ENCODE measurements at regions of chr19 and their contacts with region 1.

Region 1: DNA sequence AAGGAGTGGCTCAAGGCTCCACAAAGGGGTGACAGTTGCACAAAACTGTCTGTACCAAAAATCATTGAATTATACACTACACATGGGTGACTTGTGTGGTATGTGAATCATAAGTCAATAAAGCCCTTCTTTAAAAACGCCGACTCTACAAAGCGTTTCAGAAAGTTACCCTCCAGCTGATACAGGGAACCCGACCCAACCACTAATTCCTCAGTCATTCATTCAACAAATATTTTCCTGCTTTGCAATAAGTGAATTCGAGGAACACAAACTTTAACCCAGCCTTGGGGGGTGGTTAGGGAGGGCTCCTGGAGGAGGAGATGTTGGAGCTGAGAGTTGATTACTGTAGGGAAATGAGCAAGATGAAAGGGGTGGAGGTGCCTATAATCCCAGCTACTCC is 32.0 kb downstream of the LTBP4 start:
- DNase-seq: no peak
- H3K4me3 ChIP-seq: no peak overlapping the region
- H3K4me3 Mint-ChIP-seq: no peak overlapping the region
- H3K27ac ChIP-seq: no peak overlapping the region
- H3K27ac Mint-ChIP-seq: no peak overlapping the region
- H3K4me1 ChIP-seq: peaks cover 6% of the 10 kb centered on the region
- H3K4me1 Mint-ChIP-seq: peaks cover 4 to 14% (median 7%) of the 10 kb centered on the region in 4 donors
- H3K27me3 ChIP-seq: no peaks in the 10 kb centered on the region
- H3K27me3 Mint-ChIP-seq: peaks cover 0 to 2% of the 10 kb centered on the region in 2 donors

Region 2: GRCh38 chr19:40305403-40305802 is 327.8 kb before region 1 on chr19:
- CTCF ChIA-PET with region 1: interaction called, 15 read pairs
- POLR2A ChIA-PET with region 1: no interaction called
- intact Hi-C with region 1: loop called (anchors 1 kb)
- DNase-seq: peak; percentile 66 to 73 (median 71)
- H3K4me3 ChIP-seq: no peak overlapping the region
- H3K4me3 Mint-ChIP-seq: no peak overlapping the region
- H3K27ac ChIP-seq: no peak overlapping the region
- H3K27ac Mint-ChIP-seq: no peak overlapping the region
- H3K4me1 ChIP-seq: no peaks in the 10 kb centered on the region
- H3K4me1 Mint-ChIP-seq: peaks cover 0 to 5% (median 2%) of the 10 kb centered on the region in 4 donors
- H3K27me3 ChIP-seq: no peaks in the 10 kb centered on the region
- H3K27me3 Mint-ChIP-seq: no peaks in the 10 kb centered on the region

Region 3: DNA sequence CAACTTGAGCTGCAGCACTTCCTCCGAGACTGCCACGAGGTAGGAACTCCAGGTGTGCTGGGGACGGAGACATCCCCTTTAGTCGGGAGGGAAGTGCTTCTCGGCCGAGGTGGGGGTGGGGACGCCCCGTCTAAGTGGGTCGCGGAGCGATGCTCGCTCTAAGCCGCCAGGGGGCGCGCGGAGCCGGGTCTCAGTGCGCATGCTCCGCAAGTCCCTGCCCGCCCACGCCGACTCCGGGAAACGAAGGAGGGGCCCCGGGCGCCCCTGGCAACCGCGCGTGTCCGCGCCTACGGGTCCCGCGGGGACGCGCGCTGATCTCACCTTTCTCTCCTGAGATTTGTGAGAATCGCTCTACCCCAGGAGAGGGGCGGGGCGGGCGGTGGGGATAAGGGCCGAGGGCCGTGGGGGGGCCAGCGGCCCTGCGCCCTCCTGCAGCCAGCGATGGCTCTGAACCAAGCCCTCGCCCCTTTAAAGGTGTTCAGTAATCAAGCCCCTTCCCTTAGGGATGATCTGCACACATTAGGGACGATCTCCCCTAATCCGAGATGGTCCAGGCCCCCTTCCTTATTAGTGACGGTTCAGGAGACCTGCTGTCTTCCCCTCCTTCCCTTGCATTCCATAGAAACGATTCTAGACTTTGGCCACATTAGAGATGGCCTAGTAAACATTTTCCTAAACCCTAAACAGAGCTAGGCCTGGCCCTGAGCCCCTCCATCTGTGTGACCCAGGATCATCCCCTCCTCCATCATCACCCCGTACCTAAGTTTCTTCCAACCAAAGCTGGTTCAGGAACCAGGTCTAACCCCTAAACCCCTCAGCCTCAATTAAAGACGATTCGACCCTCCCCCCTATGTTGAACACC is 103.9 kb before region 1 on chr19:
- CTCF ChIA-PET with region 1: interaction called, 9 read pairs
- POLR2A ChIA-PET with region 1: no interaction called
- intact Hi-C with region 1: loop called (anchors 1 kb)
- DNase-seq: peak; percentile 88 to 90 (median 89)
- H3K4me3 ChIP-seq: peak overlapping the region in 1 of 2 donors; percentile 54
- H3K4me3 Mint-ChIP-seq: peak overlapping the region; percentile 65 to 87 (median 78)
- H3K27ac ChIP-seq: no peak overlapping the region
- H3K27ac Mint-ChIP-seq: peak overlapping the region; percentile 53 to 93 (median 77)
- H3K4me1 ChIP-seq: peaks cover 14% of the 10 kb centered on the region
- H3K4me1 Mint-ChIP-seq: peaks cover 9 to 26% (median 15%) of the 10 kb centered on the region in 4 donors
- H3K27me3 ChIP-seq: peaks cover 9% of the 10 kb centered on the region
- H3K27me3 Mint-ChIP-seq: peaks cover 18 to 30% of the 10 kb centered on the region in 2 donors

Region 4: GRCh38 chr19:40542202-40542859 is 90.9 kb before region 1 on chr19:
- CTCF ChIA-PET with region 1: interaction called, 40 read pairs
- POLR2A ChIA-PET with region 1: no interaction called
- intact Hi-C with region 1: no loop called
- DNase-seq: no peak
- H3K4me3 ChIP-seq: no peak overlapping the region
- H3K4me3 Mint-ChIP-seq: no peak overlapping the region
- H3K27ac ChIP-seq: no peak overlapping the region
- H3K27ac Mint-ChIP-seq: peak overlapping the region in 1 of 7 donors; percentile 18
- H3K4me1 ChIP-seq: no peaks in the 10 kb centered on the region
- H3K4me1 Mint-ChIP-seq: peaks cover 0 to 1% (median under 1%) of the 10 kb centered on the region in 4 donors
- H3K27me3 ChIP-seq: no peaks in the 10 kb centered on the region
- H3K27me3 Mint-ChIP-seq: peaks cover 7 to 9% of the 10 kb centered on the region in 2 donors

Region 5: DNA sequence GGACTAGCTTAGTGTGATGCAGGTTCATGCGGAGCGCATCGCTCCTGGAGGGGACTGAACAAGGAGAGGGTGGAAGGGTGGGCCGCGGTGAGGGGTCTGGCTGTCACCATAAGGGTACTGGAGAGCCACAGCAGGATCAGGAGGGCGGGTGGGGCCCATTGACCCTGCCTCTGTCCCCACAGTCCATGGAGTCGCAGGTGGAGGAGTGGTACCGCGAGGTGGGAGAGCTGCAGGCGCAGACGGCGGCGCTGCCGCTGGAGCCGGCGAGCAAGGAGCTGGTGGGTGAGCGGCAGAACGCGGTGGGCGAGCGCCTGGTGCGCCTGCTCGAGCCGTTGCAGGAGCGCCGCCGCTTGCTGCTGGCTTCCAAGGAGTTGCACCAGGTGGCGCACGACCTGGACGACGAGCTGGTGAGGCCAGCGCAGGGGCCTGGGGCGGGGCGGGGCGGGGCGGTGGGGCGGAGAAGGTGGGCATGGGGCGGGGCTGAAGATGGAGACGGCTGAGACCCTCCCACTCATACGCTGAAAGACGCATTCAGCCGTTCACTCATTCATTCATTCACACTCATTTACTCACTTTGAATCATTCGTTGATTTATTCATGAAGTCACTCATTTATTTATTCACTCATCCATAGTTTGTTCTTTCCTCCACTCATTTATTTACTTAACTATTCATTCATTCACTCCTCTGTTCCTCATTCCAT is 84.0 kb before region 1 on chr19:
- CTCF ChIA-PET with region 1: interaction called, 40 read pairs
- POLR2A ChIA-PET with region 1: no interaction called
- intact Hi-C with region 1: loop called (anchors 2 kb)
- DNase-seq: peak; percentile 57 to 66 (median 61)
- H3K4me3 ChIP-seq: no peak overlapping the region
- H3K4me3 Mint-ChIP-seq: peak overlapping the region; percentile 5 to 55 (median 38)
- H3K27ac ChIP-seq: no peak overlapping the region
- H3K27ac Mint-ChIP-seq: no peak overlapping the region
- H3K4me1 ChIP-seq: peaks cover 5% of the 10 kb centered on the region
- H3K4me1 Mint-ChIP-seq: peaks cover 5 to 11% (median 8%) of the 10 kb centered on the region in 4 donors
- H3K27me3 ChIP-seq: peaks cover 5% of the 10 kb centered on the region
- H3K27me3 Mint-ChIP-seq: peaks cover 36 to 49% of the 10 kb centered on the region in 2 donors

Region 6: DNA sequence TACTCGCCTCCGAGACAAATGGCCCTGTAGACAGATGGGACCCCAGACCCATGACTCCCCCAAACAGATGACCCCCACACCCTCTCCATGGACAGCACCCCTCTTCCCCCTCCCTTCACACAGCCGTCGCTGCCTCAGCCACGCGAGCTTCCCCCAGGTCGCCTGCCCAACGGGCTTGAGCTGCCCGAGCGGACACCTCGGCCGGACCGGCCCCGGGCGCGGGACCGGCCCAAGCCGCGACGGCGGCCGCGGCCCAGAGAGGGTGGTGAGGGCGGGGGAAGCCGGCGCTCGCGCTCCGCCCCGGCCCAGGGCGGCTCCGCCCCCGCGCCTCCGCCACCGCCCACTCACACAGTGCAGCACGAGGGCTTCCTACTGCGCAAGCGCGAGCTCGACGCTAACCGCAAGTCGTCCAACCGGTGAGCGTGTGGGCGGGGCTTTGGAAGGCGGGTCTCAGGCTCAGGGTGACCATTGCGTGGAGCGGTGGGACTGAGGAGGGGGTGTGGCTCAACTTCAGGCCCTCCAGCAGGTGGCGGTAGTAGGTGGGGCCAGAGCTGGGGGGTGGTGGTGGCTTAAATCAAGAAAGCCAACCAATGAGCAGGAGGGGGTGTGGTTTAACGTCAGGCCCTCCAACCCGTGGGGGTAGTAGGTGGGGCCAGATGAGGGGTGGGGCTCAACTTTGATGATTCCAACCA is 62.7 kb before region 1 on chr19:
- CTCF ChIA-PET with region 1: interaction called, 16 read pairs
- POLR2A ChIA-PET with region 1: no interaction called
- intact Hi-C with region 1: no loop called
- DNase-seq: peak; percentile 95 to 98 (median 98)
- H3K4me3 ChIP-seq: peak overlapping the region; percentile 17 to 61
- H3K4me3 Mint-ChIP-seq: peak overlapping the region; percentile 65 to 88 (median 82)
- H3K27ac ChIP-seq: no peak overlapping the region
- H3K27ac Mint-ChIP-seq: peak overlapping the region; percentile 30 to 94 (median 91)
- H3K4me1 ChIP-seq: peaks cover 14% of the 10 kb centered on the region
- H3K4me1 Mint-ChIP-seq: peaks cover 8 to 26% (median 16%) of the 10 kb centered on the region in 4 donors
- H3K27me3 ChIP-seq: no peaks in the 10 kb centered on the region
- H3K27me3 Mint-ChIP-seq: peaks cover 5 to 7% of the 10 kb centered on the region in 2 donors

Region 7: DNA sequence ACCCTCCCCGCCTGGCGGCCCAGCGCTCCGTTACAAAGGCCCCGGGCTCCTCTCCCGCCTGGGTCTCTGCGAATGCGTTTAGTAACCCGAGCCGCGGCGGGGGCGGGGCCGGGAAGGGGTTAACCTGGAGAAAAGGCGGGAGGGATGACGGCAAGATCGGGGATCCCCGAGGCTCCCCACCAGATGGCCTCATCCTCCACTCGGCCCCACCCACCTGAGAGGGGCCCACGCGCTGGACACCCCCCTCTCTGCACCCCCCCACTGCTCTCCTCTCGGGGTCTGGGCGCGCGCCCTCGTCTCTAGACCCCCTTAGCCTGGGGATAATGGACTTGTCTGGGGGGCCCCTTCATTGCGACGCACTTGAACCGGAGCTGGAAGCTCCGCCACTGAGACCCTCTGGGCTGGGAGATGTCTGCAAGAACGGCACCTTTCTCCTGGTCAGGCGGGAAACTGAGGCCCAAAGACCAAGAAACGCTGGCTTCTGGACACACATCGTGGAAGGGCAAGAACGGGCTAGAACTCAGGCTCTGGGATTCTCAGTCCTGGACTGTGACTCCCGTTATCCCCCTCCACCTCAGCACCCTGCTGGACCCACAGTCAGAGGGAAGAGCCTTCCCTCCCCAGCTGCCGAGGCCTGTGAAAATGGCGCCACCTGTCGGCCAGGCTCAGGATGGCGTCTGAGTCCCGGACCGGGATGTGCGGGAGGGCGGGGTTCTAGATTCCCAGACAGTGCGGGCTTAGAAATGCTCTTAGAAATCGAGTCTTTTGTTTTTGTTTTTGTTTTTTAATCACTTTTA is 34.9 kb before region 1 on chr19:
- CTCF ChIA-PET with region 1: interaction called, 106 read pairs
- POLR2A ChIA-PET with region 1: interaction called, 7 read pairs
- intact Hi-C with region 1: no loop called
- DNase-seq: peak; percentile 76 to 83 (median 78)
- H3K4me3 ChIP-seq: no peak overlapping the region
- H3K4me3 Mint-ChIP-seq: peak overlapping the region in 4 of 8 donors; percentile 45 to 58 (median 55)
- H3K27ac ChIP-seq: no peak overlapping the region
- H3K27ac Mint-ChIP-seq: peak overlapping the region in 3 of 7 donors; percentile 28 to 68 (median 42)
- H3K4me1 ChIP-seq: peaks cover 64% of the 10 kb centered on the region
- H3K4me1 Mint-ChIP-seq: peaks cover 34 to 63% (median 47%) of the 10 kb centered on the region in 4 donors
- H3K27me3 ChIP-seq: peaks cover 26% of the 10 kb centered on the region
- H3K27me3 Mint-ChIP-seq: peaks cover 19 to 29% of the 10 kb centered on the region in 2 donors

Region 8: GRCh38 chr19:40948580-40949299 is 315.5 kb after region 1 on chr19:
- CTCF ChIA-PET with region 1: no interaction called
- POLR2A ChIA-PET with region 1: no interaction called
- intact Hi-C with region 1: no loop called
- DNase-seq: no peak
- H3K4me3 ChIP-seq: no peak overlapping the region
- H3K4me3 Mint-ChIP-seq: no peak overlapping the region
- H3K27ac ChIP-seq: no peak overlapping the region
- H3K27ac Mint-ChIP-seq: no peak overlapping the region
- H3K4me1 ChIP-seq: no peaks in the 10 kb centered on the region
- H3K4me1 Mint-ChIP-seq: no peaks in the 10 kb centered on the region
- H3K27me3 ChIP-seq: no peaks in the 10 kb centered on the region
- H3K27me3 Mint-ChIP-seq: peaks cover 7 to 23% of the 10 kb centered on the region in 2 donors

Measured in CD4-positive, alpha-beta memory T cell (primary cell).